ENCODE measurements at regions of chr5 and their contacts with region 1.

Region 1: DNA sequence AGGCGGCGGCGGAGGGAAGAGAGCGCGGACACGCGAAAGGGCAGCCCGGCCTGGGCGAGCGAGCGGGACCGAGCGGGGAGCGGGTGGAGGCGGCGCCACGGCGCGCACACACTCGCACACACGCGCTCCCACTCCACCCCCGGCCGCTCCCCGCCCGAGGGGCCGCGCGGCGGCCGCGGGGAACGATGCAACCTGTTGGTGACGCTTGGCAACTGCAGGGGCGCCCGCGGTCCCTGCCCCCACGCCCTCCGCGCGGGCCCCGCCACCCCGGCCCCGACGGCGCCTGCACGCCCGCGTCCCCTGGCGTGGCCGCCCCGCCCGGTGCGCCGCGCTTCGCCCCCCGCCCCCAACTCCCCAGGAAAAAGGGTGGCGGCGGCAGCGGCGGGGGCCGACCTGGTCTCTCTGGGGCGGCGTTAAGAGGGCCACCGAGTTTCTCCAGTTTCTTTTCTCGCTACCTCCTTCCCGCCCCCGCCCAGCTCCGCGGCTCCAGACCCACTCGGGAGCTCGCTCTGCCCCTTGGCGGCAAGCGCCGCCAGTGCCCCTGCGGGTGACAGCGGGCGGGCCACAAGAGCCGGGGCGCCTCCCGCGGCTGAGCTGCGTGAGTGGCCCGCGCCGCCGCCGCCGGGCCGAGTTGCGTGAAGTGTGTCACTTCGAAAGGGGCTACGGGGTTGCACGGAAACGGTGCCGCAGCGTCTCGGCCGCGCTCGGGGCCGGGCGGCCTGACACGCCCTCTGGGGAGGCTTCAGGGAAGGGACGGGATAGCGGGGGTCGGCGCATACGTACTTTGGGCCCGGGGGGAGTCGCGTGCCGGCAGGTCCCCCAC is at the start of gene NR3C1:
- DNase-seq: peak; percentile 93 to 96
- ATAC-seq: peak; percentile 90
- H3K4me3 ChIP-seq: peak within 1 kb of the TSS; percentile 23 to 77
- H3K27ac ChIP-seq: peak within 1 kb of the TSS; percentile 91 to 93
- H3K4me1 ChIP-seq: peaks cover 10 to 11% of the 10 kb centered on the region in 2 donors
- H3K27me3 ChIP-seq: no peaks in the 10 kb centered on the region
- total RNA-seq, gene NR3C1: 61.2 to 105 TPM

Region 2: GRCh38 chr5:143008809-143009521 is 394.8 kb before region 1 on chr5:
- intact Hi-C with region 1: loop called in 1 of 2 experiments (anchors 5 kb)
- DNase-seq: peak in 1 of 2 donors; percentile 61
- ATAC-seq: peak; percentile 51
- H3K4me3 ChIP-seq: no peak overlapping the region
- H3K27ac ChIP-seq: no peak overlapping the region
- H3K4me1 ChIP-seq: peaks cover 2 to 5% of the 10 kb centered on the region in 2 donors
- H3K27me3 ChIP-seq: no peaks in the 10 kb centered on the region

Region 3: GRCh38 chr5:143086908-143087637 is 316.7 kb before region 1 on chr5:
- intact Hi-C with region 1: no loop called
- DNase-seq: no peak
- ATAC-seq: no peak
- H3K4me3 ChIP-seq: no peak overlapping the region
- H3K27ac ChIP-seq: no peak overlapping the region
- H3K4me1 ChIP-seq: no peaks in the 10 kb centered on the region
- H3K27me3 ChIP-seq: no peaks in the 10 kb centered on the region

Region 4: DNA sequence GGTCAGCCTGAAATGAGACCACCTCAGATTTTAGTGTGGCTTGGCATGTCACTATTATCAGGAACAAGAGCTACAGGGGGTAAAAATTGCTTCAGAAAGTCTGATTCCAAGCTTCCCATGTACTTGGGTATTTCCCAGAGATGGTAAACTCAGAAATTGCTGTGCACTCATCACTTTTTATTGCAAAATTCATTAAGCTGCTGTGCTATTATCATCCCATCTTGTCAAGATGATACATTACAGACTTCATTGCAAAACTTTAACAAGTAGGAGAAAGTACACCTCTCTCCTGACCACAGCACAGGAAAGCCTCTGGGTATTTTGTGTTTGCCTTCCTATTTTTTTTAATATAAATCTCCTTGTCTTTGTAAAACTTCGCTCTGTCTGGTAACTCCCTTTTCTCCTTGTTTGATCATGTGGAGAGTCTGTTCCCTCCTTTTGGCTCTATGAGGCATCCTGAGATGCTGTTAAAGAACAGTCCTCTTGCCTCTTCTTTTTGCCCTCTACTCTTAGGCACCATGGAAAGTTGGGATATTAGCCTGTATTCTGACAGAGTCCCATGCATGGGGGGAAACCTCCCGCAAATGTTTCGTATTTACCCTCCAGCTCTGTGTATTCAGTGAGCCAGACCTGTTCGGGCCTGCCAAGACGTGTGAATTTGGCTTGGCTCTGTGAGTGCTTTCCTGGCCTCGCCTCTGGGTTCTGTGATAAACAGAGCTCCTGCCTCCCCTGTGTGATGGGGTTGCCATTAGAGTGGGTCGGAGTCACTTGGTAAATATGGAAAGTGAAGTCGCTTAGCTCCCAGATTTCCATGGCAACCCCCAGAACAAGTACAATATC is 261.0 kb before region 1 on chr5:
- intact Hi-C with region 1: loop called in 1 of 2 experiments (anchors 5 kb)
- DNase-seq: peak; percentile 79 to 84
- ATAC-seq: peak; percentile 89
- H3K4me3 ChIP-seq: no peak overlapping the region
- H3K27ac ChIP-seq: peak overlapping the region; percentile 51 to 97
- H3K4me1 ChIP-seq: peaks cover 10% of the 10 kb centered on the region in 2 donors
- H3K27me3 ChIP-seq: no peaks in the 10 kb centered on the region

Region 5: GRCh38 chr5:143309661-143310431 is 94.0 kb before region 1 on chr5:
- intact Hi-C with region 1: loop called in 1 of 2 experiments (anchors 10 kb)
- DNase-seq: no peak
- ATAC-seq: no peak
- H3K4me3 ChIP-seq: no peak overlapping the region
- H3K27ac ChIP-seq: no peak overlapping the region
- H3K4me1 ChIP-seq: peaks cover 2 to 3% of the 10 kb centered on the region in 2 donors
- H3K27me3 ChIP-seq: no peaks in the 10 kb centered on the region

Region 6: GRCh38 chr5:143564417-143564816 is 160.6 kb after region 1 on chr5:
- intact Hi-C with region 1: loop called in 1 of 2 experiments (anchors 10 kb)
- DNase-seq: no peak
- ATAC-seq: no peak
- H3K4me3 ChIP-seq: no peak overlapping the region
- H3K27ac ChIP-seq: no peak overlapping the region
- H3K4me1 ChIP-seq: no peaks in the 10 kb centered on the region
- H3K27me3 ChIP-seq: no peaks in the 10 kb centered on the region